ENCODE measurements at regions of chr4 and their contacts with region 1.

Region 1: GRCh38 chr4:40316782-40317635 is 18.1 kb upstream of the CHRNA9 start:
- DNase-seq: peak in 2 of 3 donors; percentile 34 to 61
- ATAC-seq: peak; percentile 86
- H3K4me3 ChIP-seq: no peak overlapping the region
- H3K4me1 ChIP-seq: peaks cover 15% of the 10 kb centered on the region
- CTCF ChIP-seq: peak; percentile 35

Region 2: GRCh38 chr4:40056716-40057585 is 260.1 kb before region 1 on chr4 and contains the start of gene N4BP2:
- intact Hi-C with region 1: loop called in 1 of 2 experiments (anchors 10 kb)
- DNase-seq: peak; percentile 81 to 89 (median 89)
- ATAC-seq: peak; percentile 83
- H3K4me3 ChIP-seq: peak within 1 kb of the TSS; percentile 56
- H3K4me1 ChIP-seq: peaks cover 24% of the 10 kb centered on the region
- CTCF ChIP-seq: peak; percentile 48
- total RNA-seq, gene N4BP2: 6.7 to 11.5 (median 7.2) TPM